HEK293 (cell line): ENCODE measurements at regions of chr7 and their contacts with region 1.

Region 1: GRCh38 chr7:142338633-142339501 is 81.0 kb upstream of the PRSS58 start:
- H3K4me3 ChIP-seq: no peak overlapping the region
- H3K27ac ChIP-seq: no peak overlapping the region
- H3K4me1 ChIP-seq: no peaks in the 10 kb centered on the region
- CTCF ChIP-seq: peak; percentile 79

Region 2: DNA sequence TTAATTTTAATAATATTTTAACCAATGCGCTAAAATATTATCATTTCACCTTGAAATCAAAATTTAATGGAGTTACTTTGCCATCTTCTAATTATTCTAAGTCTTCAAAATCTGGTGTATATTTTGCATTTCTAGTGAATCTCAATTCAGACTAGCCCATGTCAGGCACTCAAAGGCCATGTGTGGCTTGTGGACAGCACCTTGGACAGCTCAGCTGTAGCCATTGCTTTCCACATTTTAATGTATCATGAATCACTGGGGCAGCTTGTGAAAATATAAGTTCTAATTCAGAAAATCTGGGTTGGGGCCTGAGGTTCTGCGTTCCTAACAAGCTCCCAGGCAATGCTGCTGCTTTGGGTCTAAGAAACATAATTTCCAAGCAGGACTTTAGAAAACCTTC is 170.1 kb before region 1 on chr7:
- CTCF ChIA-PET with region 1: no interaction called
- POLR2A ChIA-PET with region 1: no interaction called
- H3K4me3 ChIP-seq: no peak overlapping the region
- H3K27ac ChIP-seq: no peak overlapping the region
- H3K4me1 ChIP-seq: no peaks in the 10 kb centered on the region
- CTCF ChIP-seq: no peak

Region 3: GRCh38 chr7:142301923-142302550 is 36.8 kb before region 1 on chr7:
- CTCF ChIA-PET with region 1: interaction called, 15 read pairs
- POLR2A ChIA-PET with region 1: no interaction called
- H3K4me3 ChIP-seq: no peak overlapping the region
- H3K27ac ChIP-seq: no peak overlapping the region
- H3K4me1 ChIP-seq: no peaks in the 10 kb centered on the region
- CTCF ChIP-seq: no peak

Region 4: DNA sequence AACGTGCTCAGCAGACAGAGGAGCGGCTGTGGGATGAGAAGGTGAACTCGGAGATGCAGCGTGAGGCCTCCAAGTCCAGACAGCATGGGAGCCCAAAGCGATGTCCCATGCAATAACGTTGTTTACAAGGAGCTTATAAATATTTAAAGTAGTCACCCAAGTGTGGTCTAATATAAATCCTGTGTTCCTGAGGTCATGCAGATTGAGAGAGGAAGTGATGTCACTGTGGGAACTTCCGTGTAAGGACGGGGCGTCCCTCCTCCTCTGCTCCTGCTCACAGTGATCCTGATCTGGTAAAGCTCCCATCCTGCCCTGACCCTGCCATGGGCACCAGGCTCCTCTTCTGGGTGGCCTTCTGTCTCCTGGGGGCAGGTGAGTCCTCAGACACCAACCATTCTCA is 13.7 kb after region 1 on chr7:
- CTCF ChIA-PET with region 1: interaction called, 25 read pairs
- POLR2A ChIA-PET with region 1: no interaction called
- H3K4me3 ChIP-seq: no peak overlapping the region
- H3K27ac ChIP-seq: no peak overlapping the region
- H3K4me1 ChIP-seq: no peaks in the 10 kb centered on the region
- CTCF ChIP-seq: no peak

Region 5: DNA sequence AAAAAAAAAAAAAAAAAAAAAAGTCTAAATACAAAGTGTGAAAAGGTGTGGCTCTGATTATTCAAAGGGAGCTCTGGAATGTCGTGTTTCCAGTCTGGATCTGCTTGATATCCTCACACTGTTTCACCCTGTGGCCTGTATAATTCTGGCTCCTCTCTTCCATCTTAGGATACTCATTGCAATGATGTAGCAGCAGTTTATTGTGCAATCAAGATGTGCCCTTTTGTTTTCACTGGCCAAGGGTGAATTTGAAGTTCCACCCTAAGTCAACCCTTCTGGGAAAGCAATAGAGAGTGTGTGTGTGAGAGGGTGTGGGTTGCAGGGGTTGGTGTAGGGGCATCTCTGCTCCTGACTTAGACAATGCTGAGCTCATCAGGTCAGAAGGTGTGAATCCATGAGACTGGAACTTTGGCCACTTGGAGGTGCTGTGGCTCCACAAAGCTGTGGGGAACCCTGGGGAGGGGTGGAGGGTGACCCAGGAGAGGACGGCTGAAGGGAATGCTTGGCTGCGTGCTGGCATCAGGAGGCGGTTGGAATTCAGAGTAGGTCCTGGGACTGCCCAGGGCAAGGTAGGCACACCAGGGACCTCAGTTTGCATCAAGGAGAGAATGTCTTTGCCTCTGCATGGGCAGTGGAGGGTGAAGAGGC is 36.9 kb after region 1 on chr7:
- CTCF ChIA-PET with region 1: interaction called, 10 read pairs
- POLR2A ChIA-PET with region 1: no interaction called
- H3K4me3 ChIP-seq: no peak overlapping the region
- H3K27ac ChIP-seq: no peak overlapping the region
- H3K4me1 ChIP-seq: no peaks in the 10 kb centered on the region
- CTCF ChIP-seq: no peak

Region 6: GRCh38 chr7:142478479-142479072 is 139.7 kb after region 1 on chr7:
- CTCF ChIA-PET with region 1: interaction called, 17 read pairs
- POLR2A ChIA-PET with region 1: no interaction called
- H3K4me3 ChIP-seq: no peak overlapping the region
- H3K27ac ChIP-seq: no peak overlapping the region
- H3K4me1 ChIP-seq: no peaks in the 10 kb centered on the region
- CTCF ChIP-seq: no peak